Left colon (tissue), 2 donors: ENCODE measurements at regions of chr3 and their contacts with region 1.

Region 1: GRCh38 chr3:141575879-141576743 is 89.3 kb downstream of the RASA2 start:
- DNase-seq: peak in 1 of 2 donors; percentile 22
- ATAC-seq: peak; percentile 80

Region 2: DNA sequence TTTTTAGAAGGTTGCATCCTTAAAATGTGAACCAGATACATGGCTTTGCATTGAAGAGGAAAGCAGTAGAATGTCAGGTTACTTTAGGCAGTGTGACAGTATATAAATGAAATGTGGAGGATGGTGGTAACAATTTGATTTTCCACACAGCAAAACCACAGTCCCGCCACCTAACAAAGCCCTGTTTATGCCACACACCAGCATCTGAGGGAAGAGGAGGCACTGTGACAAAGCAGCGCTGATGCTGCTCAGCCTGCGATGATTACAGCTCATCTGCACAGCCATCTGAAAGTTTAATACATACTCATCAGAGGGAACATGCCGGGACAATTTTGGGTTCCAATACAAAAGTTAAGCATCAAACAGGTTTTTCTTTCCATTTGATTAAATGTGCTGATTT is 170.9 kb after region 1 on chr3:
- intact Hi-C with region 1: loop called in 1 of 2 experiments (anchors 10 kb)
- DNase-seq: no peak
- ATAC-seq: no peak

Region 3: GRCh38 chr3:141913150-141913811 is 337.2 kb after region 1 on chr3:
- intact Hi-C with region 1: loop called in 1 of 2 experiments (anchors 10 kb)
- DNase-seq: peak in 1 of 2 donors; percentile 30
- ATAC-seq: peak; percentile 90